ENCODE measurements at regions of chr16 and their contacts with region 1.

Region 1: GRCh38 chr16:84277237-84277823 is 17.3 kb upstream of the WFDC1 start:
- DNase-seq: peak; percentile 84
- ATAC-seq: peak; percentile 82
- H3K4me3 Mint-ChIP-seq: no peak overlapping the region
- H3K27ac Mint-ChIP-seq: no peak overlapping the region
- H3K4me1 Mint-ChIP-seq: no peaks in the 10 kb centered on the region
- H3K27me3 Mint-ChIP-seq: peaks cover 4% of the 10 kb centered on the region
- CTCF ChIP-seq: peak; percentile 91

Region 2: DNA sequence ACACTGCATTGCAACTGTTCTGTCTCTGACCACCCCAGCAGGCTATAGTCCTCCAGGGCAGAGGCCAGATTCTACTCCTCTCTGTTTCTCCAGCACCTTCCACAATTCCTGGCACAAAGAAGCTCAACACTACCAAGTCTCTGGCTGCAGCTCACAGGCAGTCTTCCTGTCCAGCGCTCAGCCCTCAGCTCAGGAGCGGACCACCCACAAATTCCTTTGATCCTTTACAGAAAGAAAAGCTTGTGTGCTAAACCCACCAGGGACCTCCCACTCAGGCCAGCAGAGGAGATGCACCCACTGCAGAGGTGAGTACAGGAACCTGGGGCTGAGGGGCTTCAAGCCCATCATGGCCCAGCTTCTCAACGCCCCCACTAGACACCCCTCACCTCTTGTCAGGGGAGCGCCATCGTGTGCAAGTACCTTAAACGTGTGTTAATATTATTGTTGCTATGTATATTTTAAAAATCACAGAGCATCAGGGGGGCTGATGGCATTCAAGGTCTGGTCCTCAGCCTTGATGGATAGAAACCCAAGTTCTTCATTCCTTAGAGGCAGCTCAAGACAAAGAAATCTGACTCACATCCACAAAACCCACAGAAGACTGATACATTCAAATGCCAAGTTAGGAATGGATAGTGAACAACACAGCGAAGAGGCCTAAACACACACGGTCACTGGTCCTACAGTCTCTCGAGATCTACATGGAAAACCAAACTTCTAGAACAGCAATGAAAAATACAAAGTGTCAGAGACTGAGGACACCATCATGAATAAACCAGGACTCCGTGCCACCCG is 140.8 kb before region 1 on chr16:
- CTCF ChIA-PET with region 1: no interaction called
- POLR2A ChIA-PET with region 1: no interaction called
- intact Hi-C with region 1: no loop called
- DNase-seq: no peak
- ATAC-seq: no peak
- H3K4me3 Mint-ChIP-seq: no peak overlapping the region
- H3K27ac Mint-ChIP-seq: no peak overlapping the region
- H3K4me1 Mint-ChIP-seq: peaks cover 52% of the 10 kb centered on the region
- H3K27me3 Mint-ChIP-seq: no peaks in the 10 kb centered on the region
- CTCF ChIP-seq: no peak

Region 3: DNA sequence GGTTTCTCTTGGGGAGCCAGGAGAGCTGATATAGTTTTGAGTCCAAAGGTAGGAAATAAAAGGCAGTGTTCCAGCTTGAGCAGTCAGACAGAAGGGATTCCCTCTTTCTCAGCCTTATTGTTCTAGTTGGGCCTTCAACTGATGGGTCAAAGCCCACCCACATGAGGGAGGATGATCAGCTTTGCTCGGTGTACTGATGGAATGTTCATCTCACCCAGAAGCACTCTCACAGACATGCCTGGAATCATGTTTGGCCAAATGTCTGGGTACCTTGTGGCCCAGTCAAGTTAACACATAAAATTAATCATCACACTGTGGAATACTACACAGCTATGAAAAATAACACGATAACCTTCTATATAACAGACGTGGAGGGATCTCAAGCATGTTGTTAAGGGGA is 14.4 kb before region 1 on chr16:
- CTCF ChIA-PET with region 1: interaction called, 19 read pairs
- POLR2A ChIA-PET with region 1: interaction called, 3 read pairs
- intact Hi-C with region 1: no loop called
- DNase-seq: no peak
- ATAC-seq: no peak
- H3K4me3 Mint-ChIP-seq: no peak overlapping the region
- H3K27ac Mint-ChIP-seq: no peak overlapping the region
- H3K4me1 Mint-ChIP-seq: no peaks in the 10 kb centered on the region
- H3K27me3 Mint-ChIP-seq: peaks cover 4% of the 10 kb centered on the region
- CTCF ChIP-seq: no peak

Region 4: DNA sequence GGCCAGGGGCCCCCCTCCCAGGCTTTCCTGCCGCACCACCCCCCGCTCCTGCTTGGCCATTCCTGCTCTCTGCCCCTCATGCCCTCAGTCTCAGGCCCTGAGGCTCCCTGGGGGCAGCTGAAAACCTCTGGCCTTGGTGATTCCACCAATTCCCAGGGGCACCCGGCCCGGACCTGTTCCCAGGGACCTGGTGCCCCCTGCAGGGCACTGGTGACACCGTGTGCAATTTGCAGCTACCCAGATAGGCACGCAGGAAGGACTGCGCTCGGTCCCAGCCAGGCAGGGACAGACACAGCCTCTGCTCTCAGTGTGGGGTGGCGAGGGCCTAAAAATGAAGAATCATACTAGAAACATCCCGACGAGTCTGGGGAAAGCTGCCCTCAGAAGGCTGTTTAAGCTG is 30.8 kb after region 1 on chr16:
- CTCF ChIA-PET with region 1: interaction called, 18 read pairs
- POLR2A ChIA-PET with region 1: no interaction called
- intact Hi-C with region 1: no loop called
- DNase-seq: peak; percentile 38
- ATAC-seq: peak; percentile 62
- H3K4me3 Mint-ChIP-seq: no peak overlapping the region
- H3K27ac Mint-ChIP-seq: no peak overlapping the region
- H3K4me1 Mint-ChIP-seq: no peaks in the 10 kb centered on the region
- H3K27me3 Mint-ChIP-seq: peaks cover 14% of the 10 kb centered on the region
- CTCF ChIP-seq: peak; percentile 36

Region 5: DNA sequence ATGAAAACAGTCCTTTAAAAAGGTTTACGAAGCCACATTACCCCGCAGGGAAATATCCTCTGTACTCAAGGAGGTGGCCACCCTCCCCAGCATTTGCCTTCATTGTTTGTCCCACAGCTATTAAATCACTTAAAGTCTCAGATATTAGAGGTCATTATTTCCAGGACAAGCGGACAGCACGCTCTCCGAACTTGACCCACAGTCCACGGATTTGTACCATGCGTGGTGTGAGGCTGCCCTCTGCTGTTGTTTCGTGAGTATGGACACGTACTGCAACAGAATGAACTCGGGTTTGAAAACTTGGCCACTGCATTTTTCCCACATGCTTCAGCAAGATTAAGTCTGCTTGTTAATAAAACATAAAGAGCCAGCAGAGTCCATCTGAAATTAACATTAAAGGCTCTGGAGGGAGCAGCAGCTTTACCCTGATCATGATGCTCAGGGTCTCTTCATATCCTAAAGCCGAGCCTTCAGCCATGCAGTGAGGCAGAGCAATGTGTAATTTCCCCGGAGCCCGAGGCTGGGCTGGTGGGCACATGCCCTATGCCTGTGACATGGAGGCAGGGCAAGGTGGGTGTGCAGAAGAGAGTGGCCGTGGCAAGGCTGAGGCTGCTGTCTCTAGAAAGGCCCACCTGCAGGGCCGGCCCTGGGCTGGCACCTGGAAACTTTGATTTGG is 207.4 kb after region 1 on chr16:
- CTCF ChIA-PET with region 1: interaction called, 31 read pairs
- POLR2A ChIA-PET with region 1: no interaction called
- intact Hi-C with region 1: loop called (anchors 10 kb)
- DNase-seq: no peak
- ATAC-seq: no peak
- H3K4me3 Mint-ChIP-seq: no peak overlapping the region
- H3K27ac Mint-ChIP-seq: no peak overlapping the region
- H3K4me1 Mint-ChIP-seq: no peaks in the 10 kb centered on the region
- H3K27me3 Mint-ChIP-seq: no peaks in the 10 kb centered on the region
- CTCF ChIP-seq: peak; percentile 71